ENCODE measurements at regions of chr20 and their contacts with region 1.

Region 1: DNA sequence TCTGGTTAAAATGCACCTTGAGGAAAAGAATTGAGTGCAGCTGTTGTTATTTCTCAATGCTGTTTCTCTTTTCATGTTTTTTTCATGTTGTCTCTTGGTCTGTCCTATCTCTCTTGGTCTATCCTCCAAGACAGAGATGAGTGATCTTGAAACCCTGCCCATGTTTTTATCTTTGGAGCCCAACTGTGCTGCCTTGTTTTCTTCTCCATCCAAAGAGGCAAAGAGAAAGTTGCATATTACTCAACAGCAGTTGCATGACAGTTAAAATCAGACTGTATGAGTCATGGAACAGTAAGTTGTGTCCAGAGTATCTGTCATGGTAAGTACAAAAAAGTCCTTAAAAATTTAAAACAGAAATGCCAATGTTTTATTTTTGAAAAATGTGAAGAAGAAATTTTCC is 26.2 kb downstream of the BCAS1 start:
- DNase-seq: no peak
- H3K4me3 Mint-ChIP-seq: no peak overlapping the region
- H3K27ac Mint-ChIP-seq: peak overlapping the region; percentile 78
- H3K4me1 Mint-ChIP-seq: peaks cover 28% of the 10 kb centered on the region
- H3K27me3 Mint-ChIP-seq: no peaks in the 10 kb centered on the region

Region 2: DNA sequence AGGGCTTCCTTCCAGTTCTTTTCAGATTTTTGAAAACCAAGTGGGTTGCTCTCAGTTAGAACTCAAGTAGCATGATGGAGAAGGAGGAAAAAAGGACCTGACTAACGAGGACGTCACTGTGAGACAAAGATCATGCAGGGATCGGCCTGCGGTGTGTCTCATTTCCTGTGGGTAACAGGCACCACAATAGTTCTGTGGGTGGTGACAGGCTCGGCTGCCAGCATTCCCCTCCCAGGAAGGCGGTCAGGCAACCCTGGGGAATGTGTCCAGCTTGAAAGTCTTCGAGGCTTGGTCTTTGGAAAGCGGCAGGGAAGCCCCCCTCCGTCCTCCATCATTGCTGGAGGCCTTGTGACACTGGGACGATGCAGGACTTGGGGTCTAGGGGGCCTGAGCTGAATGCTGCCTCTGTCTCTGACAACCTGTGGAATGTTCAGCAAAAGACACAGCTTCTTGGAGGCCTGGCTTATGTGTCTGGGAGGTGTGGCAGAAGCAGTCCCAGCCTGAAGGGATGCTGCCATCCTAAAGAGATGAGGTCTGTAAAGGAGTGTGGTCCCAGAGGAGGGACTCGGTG is 94.8 kb before region 1 on chr20:
- intact Hi-C with region 1: loop called (anchors 2 kb)
- DNase-seq: peak; percentile 79
- H3K4me3 Mint-ChIP-seq: peak overlapping the region; percentile 49
- H3K27ac Mint-ChIP-seq: peak overlapping the region; percentile 90
- H3K4me1 Mint-ChIP-seq: peaks cover 31% of the 10 kb centered on the region
- H3K27me3 Mint-ChIP-seq: no peaks in the 10 kb centered on the region

Region 3: DNA sequence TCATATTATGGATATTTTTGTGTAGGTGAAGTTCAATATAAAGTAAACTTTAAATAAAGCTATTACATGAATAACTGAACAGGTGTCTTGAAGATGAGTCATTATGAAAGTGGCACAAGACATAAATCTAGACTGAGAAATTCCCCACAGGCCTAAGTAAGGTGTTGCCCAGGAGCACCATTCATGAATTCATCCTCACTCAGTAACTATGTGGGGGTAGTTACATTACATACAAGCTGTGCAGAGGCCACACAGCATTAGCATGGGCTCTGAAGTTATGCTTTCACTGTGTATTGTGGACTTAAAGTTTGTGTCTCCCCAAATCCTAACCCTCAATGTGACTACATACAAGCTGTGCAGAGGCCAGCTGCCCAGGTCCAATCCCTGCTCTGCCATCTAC is 39.7 kb before region 1 on chr20:
- intact Hi-C with region 1: no loop called
- DNase-seq: no peak
- H3K4me3 Mint-ChIP-seq: no peak overlapping the region
- H3K27ac Mint-ChIP-seq: no peak overlapping the region
- H3K4me1 Mint-ChIP-seq: peaks cover 2% of the 10 kb centered on the region
- H3K27me3 Mint-ChIP-seq: peaks cover 17% of the 10 kb centered on the region

Region 4: GRCh38 chr20:54017809-54018208 is 26.3 kb before region 1 on chr20:
- intact Hi-C with region 1: no loop called
- DNase-seq: no peak
- H3K4me3 Mint-ChIP-seq: no peak overlapping the region
- H3K27ac Mint-ChIP-seq: no peak overlapping the region
- H3K4me1 Mint-ChIP-seq: peaks cover 7% of the 10 kb centered on the region
- H3K27me3 Mint-ChIP-seq: peaks cover 4% of the 10 kb centered on the region